ENCODE measurements at regions of chr3 and their contacts with region 1.

Region 1: GRCh38 chr3:124401843-124402242 is 328.4 kb upstream of the UMPS start:
- DNase-seq: no peak
- ATAC-seq: no peak
- H3K4me3 ChIP-seq: no peak overlapping the region
- H3K4me3 Mint-ChIP-seq: no peak overlapping the region
- H3K27ac ChIP-seq: no peak overlapping the region
- H3K27ac Mint-ChIP-seq: no peak overlapping the region
- H3K4me1 ChIP-seq: no peaks in the 10 kb centered on the region
- H3K4me1 Mint-ChIP-seq: no peaks in the 10 kb centered on the region
- H3K27me3 ChIP-seq: no peaks in the 10 kb centered on the region
- H3K27me3 Mint-ChIP-seq: peaks cover 13 to 19% of the 10 kb centered on the region in 2 donors

Region 2: DNA sequence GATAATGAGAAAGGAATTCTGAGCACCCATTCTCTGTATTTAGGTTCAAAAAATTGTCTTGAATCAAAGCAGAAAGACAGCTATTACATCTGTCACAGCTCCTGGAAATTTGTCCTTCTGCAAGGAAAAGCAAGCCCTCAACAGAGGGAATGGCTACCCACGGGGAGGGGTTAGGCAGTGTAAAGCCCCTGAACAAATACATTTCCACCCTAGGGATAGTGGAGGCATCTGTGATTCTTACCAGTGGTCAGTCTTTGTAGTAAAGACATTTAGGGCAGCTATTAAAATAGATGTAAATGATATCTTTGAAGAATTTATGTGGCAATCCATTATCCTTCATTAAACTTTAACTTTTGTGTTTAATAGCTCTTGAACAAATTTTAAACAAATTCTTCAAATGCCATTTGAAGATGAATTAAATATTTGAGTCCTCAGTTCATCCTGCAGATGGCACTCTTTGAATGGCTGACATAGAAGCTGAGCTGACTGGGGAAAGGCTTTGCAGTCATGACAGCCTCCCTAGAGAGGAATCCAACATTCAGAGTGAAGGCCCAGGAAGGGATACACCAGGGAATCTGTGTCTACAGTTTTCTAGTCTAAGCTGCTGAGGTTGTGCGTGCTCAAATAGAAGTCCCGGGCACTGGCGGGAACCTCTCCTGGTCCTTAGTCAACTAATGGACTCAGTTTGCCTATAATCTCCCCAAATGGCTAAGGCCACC is 50.3 kb before region 1 on chr3:
- CTCF ChIA-PET with region 1: no interaction called
- POLR2A ChIA-PET with region 1: no interaction called
- DNase-seq: no peak
- ATAC-seq: no peak
- H3K4me3 ChIP-seq: no peak overlapping the region
- H3K4me3 Mint-ChIP-seq: no peak overlapping the region
- H3K27ac ChIP-seq: no peak overlapping the region
- H3K27ac Mint-ChIP-seq: no peak overlapping the region
- H3K4me1 ChIP-seq: no peaks in the 10 kb centered on the region
- H3K4me1 Mint-ChIP-seq: no peaks in the 10 kb centered on the region
- H3K27me3 ChIP-seq: no peaks in the 10 kb centered on the region
- H3K27me3 Mint-ChIP-seq: peaks cover 5 to 8% of the 10 kb centered on the region in 2 donors

Region 3: DNA sequence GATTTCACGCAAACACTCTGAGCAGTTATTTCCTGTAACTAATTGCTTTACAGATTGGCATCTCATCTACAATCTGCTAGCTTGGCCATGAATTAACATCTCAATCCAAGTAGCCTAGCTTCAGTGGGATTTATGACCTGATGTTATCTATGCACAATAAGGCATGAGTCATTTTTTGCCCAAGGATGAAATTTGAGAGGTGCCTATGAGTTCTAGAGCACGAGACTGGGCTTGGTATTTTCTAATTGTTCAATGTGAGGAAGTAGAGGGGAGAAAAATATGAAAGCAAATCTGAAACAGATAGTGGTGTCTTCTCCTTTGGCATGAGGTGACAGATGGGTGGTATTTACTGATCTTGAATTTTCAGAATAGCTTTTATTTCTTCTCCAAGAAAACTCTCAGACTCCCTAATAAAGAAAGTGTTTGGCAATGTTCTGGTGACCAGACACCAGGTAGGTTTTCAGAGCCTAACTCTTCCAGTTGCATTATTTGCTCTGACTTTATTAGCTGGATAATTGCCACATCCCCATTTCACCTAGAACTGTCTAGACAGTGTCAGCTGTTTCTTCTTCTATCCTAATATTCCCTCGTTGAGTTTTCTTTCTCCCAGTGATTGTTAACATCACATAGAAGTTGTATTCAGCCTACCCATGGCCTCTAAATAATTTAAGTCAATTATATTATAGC is 27.4 kb after region 1 on chr3:
- CTCF ChIA-PET with region 1: no interaction called
- POLR2A ChIA-PET with region 1: interaction called in 1 of 2 experiments, 14 read pairs
- DNase-seq: no peak
- ATAC-seq: no peak
- H3K4me3 ChIP-seq: no peak overlapping the region
- H3K4me3 Mint-ChIP-seq: no peak overlapping the region
- H3K27ac ChIP-seq: no peak overlapping the region
- H3K27ac Mint-ChIP-seq: no peak overlapping the region
- H3K4me1 ChIP-seq: no peaks in the 10 kb centered on the region
- H3K4me1 Mint-ChIP-seq: no peaks in the 10 kb centered on the region
- H3K27me3 ChIP-seq: peaks cover 0 to 2% of the 10 kb centered on the region in 2 experiments
- H3K27me3 Mint-ChIP-seq: peaks cover 6 to 7% of the 10 kb centered on the region in 2 donors